H1 (cell line): ENCODE measurements at regions of chr7 and their contacts with region 1.

Region 1: DNA sequence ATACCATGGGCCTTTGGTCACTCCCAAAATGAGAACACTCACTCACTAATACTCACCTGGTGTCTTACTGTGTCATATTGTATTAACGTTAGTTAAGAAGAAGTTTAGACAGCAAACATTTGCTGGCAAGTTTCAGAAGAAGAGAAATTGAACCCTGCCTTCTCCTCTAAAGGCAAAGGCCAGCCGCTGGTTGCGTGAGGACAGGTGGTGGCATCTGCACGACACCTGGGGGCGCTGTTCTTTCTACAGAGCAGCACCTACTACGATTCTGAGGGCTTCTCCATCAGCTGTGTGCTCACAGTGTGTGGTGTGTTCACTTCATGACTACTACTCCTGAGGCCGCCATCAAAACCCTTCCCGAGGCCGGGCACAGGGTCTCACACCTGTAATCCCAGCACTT is 17.9 kb upstream of the CLEC2L start:
- DNase-seq: peak in 1 of 2 experiments; percentile 81
- H3K4me3 ChIP-seq: no peak overlapping the region
- H3K27ac ChIP-seq: no peak overlapping the region
- H3K4me1 ChIP-seq: peaks cover 0 to 4% (median 0%) of the 10 kb centered on the region in 4 experiments; a peak in 1 of 7 replicates
- H3K27me3 ChIP-seq: no peaks in the 10 kb centered on the region
- CTCF ChIP-seq: peak; percentile 86 to 93 (median 93)
- EP300 ChIP-seq: no peak
- POLR2A ChIP-seq: no peak
- RAD21 ChIP-seq: peak; percentile 78 to 82

Region 2: DNA sequence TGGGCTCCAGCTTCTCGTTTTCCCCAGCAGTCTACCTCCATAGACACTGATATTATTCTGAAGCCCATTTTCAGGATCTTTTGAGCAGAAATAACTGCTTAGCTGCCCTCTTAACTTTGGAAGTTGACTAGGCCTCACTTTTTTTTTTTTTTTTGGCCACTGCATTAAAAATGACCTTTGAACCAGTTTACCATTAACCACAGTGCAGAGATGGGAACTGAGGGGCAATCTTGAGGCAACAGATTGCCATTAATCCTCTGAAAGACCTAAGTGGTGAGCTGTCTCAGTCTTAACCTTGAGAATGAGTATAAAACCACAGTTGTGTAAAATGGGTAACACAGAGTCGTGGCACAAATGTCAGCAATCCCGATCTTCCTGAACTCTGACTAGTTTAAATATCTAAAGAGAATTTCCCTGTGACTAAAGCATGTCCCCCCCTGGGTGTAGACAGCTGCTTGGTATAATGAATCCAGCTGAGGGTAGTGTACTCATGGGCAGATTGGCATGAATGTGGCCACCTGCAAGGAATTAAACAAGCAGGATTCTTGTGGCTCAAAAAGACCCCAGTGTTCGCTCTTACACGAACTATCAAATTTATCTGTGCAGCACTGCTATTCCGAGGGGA is 210.5 kb before region 1 on chr7:
- CTCF ChIA-PET with region 1: no interaction called
- POLR2A ChIA-PET with region 1: no interaction called
- DNase-seq: no peak
- H3K4me3 ChIP-seq: no peak overlapping the region
- H3K27ac ChIP-seq: no peak overlapping the region
- H3K4me1 ChIP-seq: no peaks in the 10 kb centered on the region
- H3K27me3 ChIP-seq: no peaks in the 10 kb centered on the region
- CTCF ChIP-seq: no peak
- EP300 ChIP-seq: no peak
- POLR2A ChIP-seq: no peak
- RAD21 ChIP-seq: no peak

Region 3: GRCh38 chr7:139431010-139431409 is 74.6 kb before region 1 on chr7:
- CTCF ChIA-PET with region 1: interaction called, 13 read pairs
- POLR2A ChIA-PET with region 1: no interaction called
- DNase-seq: no peak
- H3K4me3 ChIP-seq: no peak overlapping the region
- H3K27ac ChIP-seq: no peak overlapping the region
- H3K4me1 ChIP-seq: no peaks in the 10 kb centered on the region; a peak in 1 of 7 replicates
- H3K27me3 ChIP-seq: no peaks in the 10 kb centered on the region
- CTCF ChIP-seq: no peak
- EP300 ChIP-seq: no peak
- POLR2A ChIP-seq: no peak
- RAD21 ChIP-seq: no peak

Region 4: GRCh38 chr7:139490133-139490532 is 15.4 kb before region 1 on chr7:
- CTCF ChIA-PET with region 1: interaction called, 30 read pairs
- POLR2A ChIA-PET with region 1: no interaction called
- DNase-seq: no peak
- H3K4me3 ChIP-seq: no peak overlapping the region
- H3K27ac ChIP-seq: no peak overlapping the region
- H3K4me1 ChIP-seq: no peaks in the 10 kb centered on the region
- H3K27me3 ChIP-seq: no peaks in the 10 kb centered on the region
- CTCF ChIP-seq: no peak
- EP300 ChIP-seq: no peak
- POLR2A ChIP-seq: no peak
- RAD21 ChIP-seq: no peak

Region 5: GRCh38 chr7:139543801-139544603 is 38.4 kb after region 1 on chr7:
- CTCF ChIA-PET with region 1: interaction called, 37 read pairs
- POLR2A ChIA-PET with region 1: no interaction called
- DNase-seq: no peak
- H3K4me3 ChIP-seq: no peak overlapping the region
- H3K27ac ChIP-seq: no peak overlapping the region; the same call in 1 of the 2 replicates
- H3K4me1 ChIP-seq: peaks cover 0 to 10% (median 5%) of the 10 kb centered on the region in 4 experiments; a peak in 5 of 7 replicates
- H3K27me3 ChIP-seq: no peaks in the 10 kb centered on the region; a peak in 1 of 7 replicates
- CTCF ChIP-seq: no peak
- EP300 ChIP-seq: no peak
- POLR2A ChIP-seq: no peak
- RAD21 ChIP-seq: no peak

Region 6: DNA sequence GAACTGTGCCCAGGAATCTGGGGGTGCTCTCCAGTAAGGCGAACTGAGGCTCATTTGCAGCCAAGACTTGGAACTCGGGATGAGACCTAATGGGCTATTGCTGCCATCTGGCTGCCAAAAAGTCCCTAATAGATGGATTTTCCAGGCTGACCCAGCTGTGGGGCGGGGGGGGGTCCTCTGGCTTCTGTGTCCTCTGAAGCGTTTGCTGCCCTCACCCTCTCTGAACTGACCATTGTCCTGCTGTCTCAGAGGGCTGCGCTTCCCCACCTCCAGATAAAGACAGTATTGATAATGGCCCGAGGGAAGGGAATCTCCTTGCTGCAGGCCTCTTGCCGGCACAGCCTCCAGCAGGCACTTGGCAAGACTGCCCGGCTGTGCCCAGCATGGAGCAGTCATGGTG is 64.6 kb after region 1 on chr7:
- CTCF ChIA-PET with region 1: interaction called, 19 read pairs
- POLR2A ChIA-PET with region 1: interaction called, 3 read pairs
- DNase-seq: no peak
- H3K4me3 ChIP-seq: no peak overlapping the region
- H3K27ac ChIP-seq: no peak overlapping the region
- H3K4me1 ChIP-seq: peaks cover 0 to 13% (median 3%) of the 10 kb centered on the region in 4 experiments; a peak in 3 of 7 replicates
- H3K27me3 ChIP-seq: no peaks in the 10 kb centered on the region
- CTCF ChIP-seq: peak in 2 of 3 experiments; percentile 18 to 56; a peak in 3 of 4 replicates
- EP300 ChIP-seq: no peak
- POLR2A ChIP-seq: no peak
- RAD21 ChIP-seq: peak; percentile 67 to 74

Region 7: GRCh38 chr7:139620676-139621344 is 115.2 kb after region 1 on chr7:
- CTCF ChIA-PET with region 1: interaction called, 77 read pairs
- POLR2A ChIA-PET with region 1: no interaction called
- DNase-seq: peak in 1 of 2 experiments; percentile 93
- H3K4me3 ChIP-seq: no peak overlapping the region
- H3K27ac ChIP-seq: no peak overlapping the region
- H3K4me1 ChIP-seq: no peaks in the 10 kb centered on the region; a peak in 1 of 7 replicates
- H3K27me3 ChIP-seq: no peaks in the 10 kb centered on the region
- CTCF ChIP-seq: peak; percentile 88 to 90 (median 90)
- EP300 ChIP-seq: no peak
- POLR2A ChIP-seq: no peak
- RAD21 ChIP-seq: peak; percentile 90 to 93